Activated CD4-positive, alpha-beta T cell treated with anti-CD3 and anti-CD28 coated beads, Interleukin-2, amount 10 ng/mL, durations not matched to agents 24 days and 14 days (primary cell): ENCODE measurements at regions of chr4 and their contacts with region 1.

Region 1: DNA sequence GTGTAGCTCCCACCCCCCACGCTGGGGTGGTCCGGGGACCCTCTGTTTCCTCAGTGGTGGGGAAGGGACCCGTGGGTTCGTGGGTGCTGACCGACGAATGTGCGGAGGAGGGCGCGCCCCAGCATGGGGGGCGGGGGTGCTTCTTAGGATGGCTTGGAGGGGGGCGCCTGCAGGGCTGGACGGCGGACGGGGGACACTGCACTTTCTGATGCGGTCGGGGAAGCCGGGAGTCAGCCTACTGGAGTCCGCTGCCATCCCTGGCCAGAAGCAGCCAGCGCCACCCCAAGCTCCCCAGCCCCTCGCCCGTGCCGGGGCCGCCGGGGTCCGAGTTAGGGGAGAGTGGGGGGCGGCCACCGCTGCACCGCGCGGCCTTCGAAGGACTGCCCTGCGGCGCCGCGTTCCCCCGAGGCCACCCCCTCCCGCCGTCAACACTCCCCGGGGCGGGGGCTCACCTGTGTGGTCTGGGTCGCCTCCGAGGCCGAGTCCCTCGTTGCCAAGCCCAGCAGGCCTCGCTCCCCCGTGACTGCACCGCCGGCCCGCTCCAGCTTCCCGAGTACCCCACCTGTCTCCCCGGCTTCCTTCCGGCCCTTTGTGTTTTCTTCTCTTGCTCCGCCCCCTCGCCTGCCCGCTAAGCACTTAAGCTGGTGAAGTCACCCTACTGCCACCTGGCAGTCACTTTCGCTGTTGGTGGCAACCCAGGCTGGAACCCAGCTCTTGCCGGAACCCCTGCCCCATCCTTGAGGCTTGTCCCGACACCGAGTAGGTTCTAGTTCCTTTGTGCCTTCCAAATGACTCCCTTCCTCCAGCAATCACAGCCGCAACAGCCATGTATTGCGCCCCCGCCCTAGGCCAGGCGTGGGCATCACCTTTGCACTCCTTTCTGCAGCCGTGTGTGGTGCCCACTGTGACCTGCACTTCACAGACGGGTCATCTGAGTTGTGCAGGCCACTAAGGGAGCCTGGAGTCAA is at the start of gene OCIAD2:
- DNase-seq: peak; percentile 93
- H3K4me3 Mint-ChIP-seq: peak within 1 kb of the TSS; percentile 94
- H3K27ac Mint-ChIP-seq: peak within 1 kb of the TSS; percentile 90
- H3K4me1 Mint-ChIP-seq: peaks cover 39% of the 10 kb centered on the region
- H3K27me3 Mint-ChIP-seq: no peaks in the 10 kb centered on the region
- total RNA-seq, gene OCIAD2: 54.1 and 65.3 TPM in 2 replicates

Region 2: DNA sequence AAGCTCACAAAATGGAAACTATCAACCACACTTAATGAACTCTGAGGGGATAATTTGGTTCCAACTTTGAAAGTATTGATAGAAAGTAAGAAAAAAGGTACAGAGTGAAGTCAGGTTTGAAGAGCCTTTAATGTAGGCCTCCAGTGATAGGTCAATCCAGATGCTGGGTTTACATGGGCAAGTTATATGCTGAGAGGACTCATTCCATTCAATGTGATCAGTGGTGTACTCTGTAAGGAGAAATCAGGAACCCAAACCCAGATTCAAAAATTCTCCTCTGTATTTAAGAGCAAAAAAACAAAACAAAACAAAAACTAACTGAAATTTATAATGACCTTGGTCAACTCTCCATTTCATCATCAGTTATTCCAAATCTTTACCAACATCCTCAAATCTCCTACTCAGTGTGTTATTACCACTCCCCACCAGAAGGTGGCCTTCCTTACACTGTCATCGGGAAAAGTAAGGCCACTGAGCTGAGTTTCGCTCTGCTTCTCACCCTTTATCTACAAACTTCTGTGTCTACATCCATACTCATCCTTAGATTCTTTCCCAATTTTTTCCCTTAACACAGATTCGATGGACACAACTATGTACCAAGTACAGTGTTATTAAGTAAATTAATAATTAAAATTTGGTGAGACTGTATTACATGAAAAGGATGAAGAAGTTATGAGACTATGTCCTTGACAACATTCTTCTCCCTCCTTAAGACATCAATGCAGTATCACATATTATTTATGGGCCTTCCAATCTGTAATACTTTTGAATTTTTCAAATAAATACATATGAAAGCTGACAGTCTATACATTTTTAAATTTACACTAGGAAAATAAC is 328.1 kb before region 1 on chr4:
- intact Hi-C with region 1: loop called (anchors 5 kb)
- DNase-seq: peak; percentile 85
- H3K4me3 Mint-ChIP-seq: no peak overlapping the region
- H3K27ac Mint-ChIP-seq: no peak overlapping the region
- H3K4me1 Mint-ChIP-seq: peaks cover 4% of the 10 kb centered on the region
- H3K27me3 Mint-ChIP-seq: no peaks in the 10 kb centered on the region